Activated T-helper 2 cell treated with anti-CD3 and anti-CD28 coated beads, Interferon-gamma antibody, Interleukin-2, Interleukin-4, amounts not matched to agents 10 μg/mL and 5 μg/mL and 100 μg/mL, durations not matched to agents 14 hours and 24 hours and 36 hours (primary cell): ENCODE measurements at regions of chrX and their contacts with region 1.

Region 1: GRCh38 chrX:38704146-38704882 is 96.9 kb upstream of the MID1IP1 start:
- DNase-seq: no peak
- H3K4me3 Mint-ChIP-seq: no peak overlapping the region
- H3K27ac Mint-ChIP-seq: peak overlapping the region; percentile 75
- H3K4me1 Mint-ChIP-seq: peaks cover 14% of the 10 kb centered on the region
- H3K27me3 Mint-ChIP-seq: no peaks in the 10 kb centered on the region

Region 2: DNA sequence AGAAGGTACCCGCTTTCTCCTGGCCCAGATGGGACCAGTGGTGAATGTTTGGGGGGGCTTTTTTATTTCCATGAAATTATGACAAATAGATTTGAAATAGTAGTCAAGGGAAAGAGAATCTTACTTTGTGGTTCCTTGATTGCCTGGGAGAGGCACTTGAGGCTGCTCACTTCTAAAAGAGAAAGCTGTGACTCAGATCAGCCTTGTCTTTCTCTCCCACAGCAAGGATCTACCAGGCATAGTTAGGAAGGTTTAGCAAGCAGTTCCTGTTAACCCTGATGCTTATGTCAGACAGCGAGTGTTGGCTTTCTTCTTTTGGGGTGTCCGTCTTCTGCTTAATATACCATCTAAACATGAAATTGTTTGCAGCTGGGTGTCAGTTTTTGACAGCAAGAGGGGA is 28.5 kb before region 1 on chrX:
- intact Hi-C with region 1: loop called (anchors 1 kb)
- DNase-seq: no peak
- H3K4me3 Mint-ChIP-seq: no peak overlapping the region
- H3K27ac Mint-ChIP-seq: no peak overlapping the region
- H3K4me1 Mint-ChIP-seq: peaks cover 18% of the 10 kb centered on the region
- H3K27me3 Mint-ChIP-seq: no peaks in the 10 kb centered on the region